ENCODE measurements at regions of chr20 and their contacts with region 1.

Region 1: GRCh38 chr20:13119583-13119982 is 101.5 kb upstream of the ISM1 start:
- DNase-seq: peak; percentile 5
- H3K4me3 ChIP-seq: no peak overlapping the region
- CTCF ChIP-seq: peak; percentile 84

Region 2: GRCh38 chr20:13105864-13106457 is 13.6 kb before region 1 on chr20:
- CTCF ChIA-PET with region 1: interaction called, 21 read pairs
- POLR2A ChIA-PET with region 1: no interaction called
- DNase-seq: peak; percentile 4
- H3K4me3 ChIP-seq: no peak overlapping the region
- CTCF ChIP-seq: peak; percentile 33

Region 3: DNA sequence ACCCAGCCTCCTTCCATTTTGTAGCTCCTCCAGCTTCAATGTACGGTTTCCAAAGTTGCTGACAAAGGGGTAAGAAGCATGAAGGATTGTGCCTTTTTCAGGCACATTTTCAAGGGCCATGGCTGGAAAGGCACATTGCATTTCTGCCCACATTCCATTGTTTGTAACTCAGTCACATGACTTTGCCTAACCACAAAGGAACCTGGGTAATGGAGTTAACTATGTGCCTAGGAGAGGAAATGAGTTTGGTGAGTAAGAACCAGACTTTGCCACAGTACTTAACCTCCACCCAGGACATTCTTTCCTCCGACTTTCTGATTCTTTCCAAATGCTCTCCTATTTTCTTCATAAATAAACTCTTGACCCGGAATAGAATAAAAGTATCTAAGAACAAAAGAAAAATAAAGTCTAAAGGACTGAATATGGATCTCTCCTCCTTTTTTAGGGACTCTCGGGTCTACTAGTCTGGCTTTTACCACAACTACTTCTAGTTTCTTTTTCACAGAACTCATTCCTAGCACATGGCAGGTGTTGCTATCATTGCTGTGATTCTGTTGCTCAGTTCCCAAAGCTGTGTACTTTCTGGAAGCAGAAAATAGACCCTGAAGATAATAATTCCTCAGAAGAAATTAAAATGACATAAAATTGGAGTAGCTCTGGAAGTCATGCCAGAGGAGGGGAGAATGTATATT is 20.0 kb after region 1 on chr20:
- CTCF ChIA-PET with region 1: interaction called, 14 read pairs
- POLR2A ChIA-PET with region 1: no interaction called
- DNase-seq: no peak
- H3K4me3 ChIP-seq: no peak overlapping the region
- CTCF ChIP-seq: no peak

Region 4: GRCh38 chr20:13158369-13158768 is 38.8 kb after region 1 on chr20:
- CTCF ChIA-PET with region 1: no interaction called
- POLR2A ChIA-PET with region 1: no interaction called
- DNase-seq: no peak
- H3K4me3 ChIP-seq: no peak overlapping the region
- CTCF ChIP-seq: no peak

Region 5: GRCh38 chr20:13302647-13303450 is 183.3 kb after region 1 on chr20:
- CTCF ChIA-PET with region 1: interaction called, 19 read pairs
- POLR2A ChIA-PET with region 1: no interaction called
- DNase-seq: no peak
- H3K4me3 ChIP-seq: no peak overlapping the region
- CTCF ChIP-seq: peak; percentile 62

Region 6: DNA sequence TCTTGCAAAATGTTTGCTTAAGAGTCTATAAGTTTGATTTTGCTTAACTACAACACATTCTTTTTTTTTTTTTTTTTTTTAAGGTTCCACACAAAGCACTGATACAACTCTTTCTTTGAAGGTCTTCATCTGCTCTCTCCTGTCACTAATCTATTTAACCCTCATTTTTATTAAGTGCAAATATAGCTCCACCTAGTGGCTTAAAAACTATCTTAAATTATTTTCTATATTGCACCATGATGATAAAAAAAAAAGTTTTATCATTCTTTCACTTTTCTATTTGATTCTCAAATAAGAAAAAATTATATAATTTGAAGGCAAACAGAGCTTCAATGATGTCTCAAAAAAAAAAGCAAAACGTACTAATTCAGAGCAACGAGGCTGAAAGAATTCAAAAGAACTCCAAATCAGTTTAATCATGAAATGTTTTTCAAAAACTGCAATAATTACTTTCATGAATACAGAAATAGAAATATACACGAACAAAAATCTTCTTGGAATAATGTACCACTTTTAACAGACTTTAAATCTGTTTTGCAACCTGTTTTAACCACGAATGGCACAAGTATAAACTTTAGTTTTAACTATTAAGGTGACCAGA is 652.4 kb after region 1 on chr20:
- CTCF ChIA-PET with region 1: interaction called, 56 read pairs
- POLR2A ChIA-PET with region 1: no interaction called
- DNase-seq: no peak
- H3K4me3 ChIP-seq: no peak overlapping the region
- CTCF ChIP-seq: peak; percentile 2